Common myeloid progenitor, CD34-positive (primary cell): ENCODE measurements at regions of chr3 and their contacts with region 1.

Region 1: GRCh38 chr3:51955893-51956770 is 951 bp downstream of the GPR62 start:
- DNase-seq: peak; percentile 77 to 82 (median 78)
- H3K4me3 ChIP-seq: peak overlapping the region; percentile 19 to 69 (median 56)
- H3K27ac ChIP-seq: no peak overlapping the region
- H3K4me1 ChIP-seq: peaks cover 0 to 24% (median 19%) of the 10 kb centered on the region in 4 experiments
- H3K27me3 ChIP-seq: peaks cover 0 to 30% (median 24%) of the 10 kb centered on the region in 5 experiments

Region 2: DNA sequence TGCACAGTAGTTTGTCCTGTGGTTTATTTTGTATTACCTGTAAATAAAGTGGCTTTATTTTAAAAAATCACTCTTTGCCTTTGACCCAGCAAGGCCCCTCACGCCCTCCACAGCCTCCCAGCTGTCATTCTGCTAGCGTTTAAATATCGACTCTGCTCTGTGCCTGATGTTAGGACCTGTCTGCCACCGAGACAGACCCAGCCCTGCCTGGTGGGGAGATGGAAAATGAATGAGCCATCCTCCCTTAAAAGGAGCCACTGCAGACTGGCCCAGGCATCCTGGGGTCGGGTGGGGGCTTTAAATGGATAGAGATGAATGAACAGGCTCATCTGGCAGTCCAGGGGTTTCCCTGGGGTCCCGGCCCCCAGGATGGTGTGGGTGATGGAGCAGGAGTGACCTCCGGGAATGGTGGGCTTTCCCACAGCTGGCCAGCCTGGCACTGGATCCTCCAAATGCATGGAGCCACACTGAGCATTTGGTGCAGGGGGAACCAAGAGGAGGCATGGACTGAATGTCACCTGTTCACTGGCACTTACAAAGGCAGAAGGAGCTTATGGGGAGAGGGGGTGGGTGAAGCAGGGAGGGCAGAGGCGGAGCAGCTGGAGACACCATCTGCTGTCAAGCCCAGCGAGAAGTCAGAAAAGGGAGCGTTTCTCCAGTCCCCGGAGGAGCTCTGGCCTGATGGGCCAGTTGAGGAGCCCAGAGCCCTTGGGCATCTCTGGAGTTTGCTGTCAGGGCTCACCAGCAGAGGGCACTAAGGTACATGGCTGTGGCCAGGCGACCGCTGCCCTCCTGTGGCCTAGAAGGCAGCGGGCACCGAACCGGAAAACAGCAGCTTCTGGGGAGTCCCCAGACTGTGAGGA is 237.4 kb before region 1 on chr3:
- CTCF ChIA-PET with region 1: no interaction called
- POLR2A ChIA-PET with region 1: no interaction called
- DNase-seq: peak; percentile 56 to 78 (median 76)
- H3K4me3 ChIP-seq: no peak overlapping the region
- H3K27ac ChIP-seq: no peak overlapping the region
- H3K4me1 ChIP-seq: peaks cover 0 to 17% (median 13%) of the 10 kb centered on the region in 4 experiments
- H3K27me3 ChIP-seq: no peaks in the 10 kb centered on the region

Region 3: DNA sequence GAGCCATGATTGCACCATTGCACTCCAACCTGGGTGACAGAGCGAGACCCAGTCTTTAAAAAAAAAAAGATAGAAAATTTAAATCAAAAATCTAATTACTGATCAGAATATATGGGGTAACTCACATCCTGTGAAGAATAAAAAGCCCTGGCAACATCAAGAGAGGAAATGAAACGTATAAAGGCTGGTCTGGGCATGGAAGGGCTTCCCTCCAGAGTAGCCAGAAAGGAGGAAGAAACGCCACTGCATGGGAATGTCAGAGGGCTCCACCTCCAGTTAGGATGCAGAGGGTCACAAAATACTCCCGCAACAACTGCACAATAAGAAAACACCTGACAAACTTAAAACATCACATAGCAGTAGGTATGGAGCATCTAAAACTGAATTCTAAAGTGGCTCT is 48.1 kb before region 1 on chr3:
- CTCF ChIA-PET with region 1: no interaction called
- POLR2A ChIA-PET with region 1: no interaction called
- DNase-seq: no peak
- H3K4me3 ChIP-seq: no peak overlapping the region
- H3K27ac ChIP-seq: no peak overlapping the region
- H3K4me1 ChIP-seq: no peaks in the 10 kb centered on the region
- H3K27me3 ChIP-seq: no peaks in the 10 kb centered on the region

Region 4: GRCh38 chr3:51974963-51975851 is 19.1 kb after region 1 on chr3 and contains the start of gene ABHD14A:
- CTCF ChIA-PET with region 1: interaction called, 76 read pairs
- POLR2A ChIA-PET with region 1: interaction called, 3 read pairs
- DNase-seq: peak; percentile 61 to 70 (median 67)
- H3K4me3 ChIP-seq: peak within 1 kb of the TSS; percentile 65 to 90 (median 84)
- H3K27ac ChIP-seq: peak within 1 kb of the TSS in 1 of 2 experiments; percentile 77
- H3K4me1 ChIP-seq: peaks cover 4 to 38% (median 29%) of the 10 kb centered on the region in 4 experiments
- H3K27me3 ChIP-seq: no peaks in the 10 kb centered on the region